Left colon (tissue), 2 donors: ENCODE measurements at regions of chr19 and their contacts with region 1.

Region 1: GRCh38 chr19:44315883-44316282 is 11.1 kb upstream of the ZNF235 start:
- DNase-seq: no peak
- ATAC-seq: no peak

Region 2: DNA sequence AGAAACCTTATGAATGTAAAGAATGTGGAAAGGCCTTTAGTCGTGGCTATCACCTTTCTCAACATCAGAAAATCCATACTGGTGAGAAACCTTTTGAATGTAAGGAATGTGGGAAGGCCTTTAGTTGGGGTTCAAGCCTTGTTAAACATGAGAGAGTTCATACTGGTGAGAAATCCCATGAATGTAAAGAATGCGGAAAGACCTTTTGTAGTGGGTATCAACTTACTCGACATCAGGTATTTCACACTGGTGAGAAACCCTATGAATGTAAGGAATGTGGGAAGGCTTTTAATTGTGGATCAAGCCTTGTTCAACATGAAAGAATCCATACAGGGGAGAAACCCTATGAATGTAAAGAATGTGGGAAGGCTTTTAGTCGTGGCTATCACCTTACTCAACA is 468.0 kb before region 1 on chr19:
- intact Hi-C with region 1: loop called in 1 of 2 experiments (anchors 10 kb)
- DNase-seq: no peak
- ATAC-seq: no peak

Region 3: DNA sequence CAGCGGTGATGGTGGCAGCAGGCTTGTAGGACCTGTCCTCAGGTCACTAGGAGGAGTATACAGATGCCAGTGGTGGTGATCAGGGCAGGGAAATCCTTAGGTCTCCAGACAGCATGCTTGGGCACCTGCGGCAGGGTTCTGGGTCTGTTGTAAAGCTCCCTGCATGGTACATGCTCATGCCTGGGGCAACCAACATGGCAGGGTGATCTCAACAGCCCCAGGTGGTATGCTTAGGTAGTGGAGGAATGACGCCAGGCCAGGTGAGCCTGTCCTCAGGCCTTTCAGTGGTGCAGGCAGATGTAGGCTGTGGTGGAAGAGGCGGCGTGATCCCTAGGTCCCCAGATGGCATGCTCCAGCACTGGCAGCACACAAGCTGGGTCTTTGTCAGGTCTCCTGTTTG is 232.0 kb before region 1 on chr19:
- intact Hi-C with region 1: no loop called
- DNase-seq: no peak
- ATAC-seq: no peak

Region 4: DNA sequence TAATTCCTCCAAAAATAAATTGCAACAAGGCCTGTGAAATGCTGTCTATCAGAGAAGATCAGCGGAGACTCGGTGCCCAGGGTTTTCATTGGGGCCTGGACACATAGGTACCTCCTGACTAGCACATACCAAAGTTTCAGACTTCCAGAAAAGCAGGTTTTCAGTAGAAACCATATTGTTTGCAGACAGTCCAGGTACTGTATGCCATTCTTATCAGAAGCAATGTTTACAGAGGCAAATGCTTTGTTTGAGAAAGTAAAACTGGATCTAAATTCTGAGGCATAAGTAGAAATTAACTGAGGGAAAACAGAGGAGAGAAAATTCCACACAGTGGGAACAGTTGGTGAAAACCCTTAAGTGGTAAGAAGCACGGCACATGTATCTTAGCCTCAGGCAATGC is 119.6 kb after region 1 on chr19:
- intact Hi-C with region 1: no loop called
- DNase-seq: no peak
- ATAC-seq: no peak

Region 5: GRCh38 chr19:44476559-44477408 is 160.9 kb after region 1 on chr19:
- intact Hi-C with region 1: loop called in 1 of 2 experiments (anchors 10 kb)
- DNase-seq: no peak
- ATAC-seq: no peak